Activated CD4-positive, alpha-beta T cell treated with anti-CD3 and anti-CD28 coated beads for 36 hours (primary cell): ENCODE measurements at regions of chr10 and their contacts with region 1.

Region 1: DNA sequence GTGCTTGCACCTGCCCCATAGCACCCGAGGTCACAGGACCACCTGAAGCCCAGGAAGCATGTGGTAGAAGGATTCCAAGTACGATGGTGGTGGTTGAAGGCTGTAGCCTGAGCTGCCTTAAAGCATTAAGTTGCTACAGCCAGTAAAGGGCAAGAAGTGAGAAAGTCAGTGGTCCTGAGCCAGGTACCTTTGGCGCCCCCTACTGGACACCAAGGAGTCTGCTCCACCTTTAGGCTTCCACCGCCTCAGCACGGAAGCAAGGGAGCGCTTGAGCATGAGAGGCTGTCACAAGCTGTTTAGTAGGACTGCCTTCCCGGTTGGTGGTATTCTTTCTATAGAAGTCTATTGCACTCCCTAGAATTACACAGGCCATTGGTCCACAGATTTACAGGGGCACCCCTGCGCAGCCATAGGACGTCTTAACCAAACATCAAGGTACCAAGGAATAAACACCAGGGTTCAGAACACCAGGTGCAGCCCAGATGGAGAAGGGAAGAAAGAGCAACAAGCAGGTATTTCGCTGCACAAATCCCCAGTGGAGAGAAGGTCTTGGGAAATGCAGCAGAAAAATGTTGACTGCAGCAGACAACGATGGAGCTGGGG is 2.2 kb downstream of the CRTAC1 start:
- DNase-seq: peak; percentile 85
- ATAC-seq: peak; percentile 92
- H3K4me3 Mint-ChIP-seq: no peak overlapping the region
- H3K27ac Mint-ChIP-seq: no peak overlapping the region
- H3K4me1 Mint-ChIP-seq: peaks cover 3% of the 10 kb centered on the region
- H3K27me3 Mint-ChIP-seq: peaks cover 39% of the 10 kb centered on the region

Region 2: GRCh38 chr10:97792141-97792721 is 236.0 kb before region 1 on chr10:
- CTCF ChIA-PET with region 1: interaction called, 3 read pairs
- POLR2A ChIA-PET with region 1: no interaction called
- intact Hi-C with region 1: loop called (anchors 5 to 10 kb)
- DNase-seq: peak; percentile 85
- ATAC-seq: peak; percentile 81
- H3K4me3 Mint-ChIP-seq: no peak overlapping the region
- H3K27ac Mint-ChIP-seq: no peak overlapping the region
- H3K4me1 Mint-ChIP-seq: peaks cover 19% of the 10 kb centered on the region
- H3K27me3 Mint-ChIP-seq: no peaks in the 10 kb centered on the region

Region 3: GRCh38 chr10:98010939-98011685 is 17.2 kb before region 1 on chr10:
- CTCF ChIA-PET with region 1: interaction called, 10 read pairs
- POLR2A ChIA-PET with region 1: no interaction called
- intact Hi-C with region 1: no loop called
- DNase-seq: no peak
- ATAC-seq: no peak
- H3K4me3 Mint-ChIP-seq: no peak overlapping the region
- H3K27ac Mint-ChIP-seq: no peak overlapping the region
- H3K4me1 Mint-ChIP-seq: peaks cover 4% of the 10 kb centered on the region
- H3K27me3 Mint-ChIP-seq: peaks cover 20% of the 10 kb centered on the region

Region 4: DNA sequence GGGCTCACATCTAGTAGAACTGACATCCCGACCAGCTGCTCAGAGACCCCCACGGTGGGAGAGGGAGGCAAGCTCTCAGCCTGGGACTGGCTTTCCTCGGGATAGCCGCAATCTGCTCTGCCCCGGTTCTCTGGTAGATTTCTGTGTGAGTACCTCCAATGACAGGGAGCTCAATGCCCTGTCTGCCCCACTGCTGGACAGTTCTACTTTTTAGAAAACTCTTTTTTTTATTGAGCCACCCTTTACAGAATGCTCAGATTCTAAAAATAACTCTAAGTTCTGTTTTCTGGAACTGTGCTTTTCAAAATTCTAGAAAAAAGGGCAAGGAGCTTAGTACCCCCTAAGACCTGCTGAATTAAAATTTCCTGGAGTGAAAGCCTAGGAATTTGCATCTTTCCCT is 25.4 kb after region 1 on chr10:
- CTCF ChIA-PET with region 1: no interaction called
- POLR2A ChIA-PET with region 1: no interaction called
- intact Hi-C with region 1: no loop called
- DNase-seq: no peak
- ATAC-seq: no peak
- H3K4me3 Mint-ChIP-seq: no peak overlapping the region
- H3K27ac Mint-ChIP-seq: no peak overlapping the region
- H3K4me1 Mint-ChIP-seq: no peaks in the 10 kb centered on the region
- H3K27me3 Mint-ChIP-seq: peaks cover 16% of the 10 kb centered on the region

Region 5: DNA sequence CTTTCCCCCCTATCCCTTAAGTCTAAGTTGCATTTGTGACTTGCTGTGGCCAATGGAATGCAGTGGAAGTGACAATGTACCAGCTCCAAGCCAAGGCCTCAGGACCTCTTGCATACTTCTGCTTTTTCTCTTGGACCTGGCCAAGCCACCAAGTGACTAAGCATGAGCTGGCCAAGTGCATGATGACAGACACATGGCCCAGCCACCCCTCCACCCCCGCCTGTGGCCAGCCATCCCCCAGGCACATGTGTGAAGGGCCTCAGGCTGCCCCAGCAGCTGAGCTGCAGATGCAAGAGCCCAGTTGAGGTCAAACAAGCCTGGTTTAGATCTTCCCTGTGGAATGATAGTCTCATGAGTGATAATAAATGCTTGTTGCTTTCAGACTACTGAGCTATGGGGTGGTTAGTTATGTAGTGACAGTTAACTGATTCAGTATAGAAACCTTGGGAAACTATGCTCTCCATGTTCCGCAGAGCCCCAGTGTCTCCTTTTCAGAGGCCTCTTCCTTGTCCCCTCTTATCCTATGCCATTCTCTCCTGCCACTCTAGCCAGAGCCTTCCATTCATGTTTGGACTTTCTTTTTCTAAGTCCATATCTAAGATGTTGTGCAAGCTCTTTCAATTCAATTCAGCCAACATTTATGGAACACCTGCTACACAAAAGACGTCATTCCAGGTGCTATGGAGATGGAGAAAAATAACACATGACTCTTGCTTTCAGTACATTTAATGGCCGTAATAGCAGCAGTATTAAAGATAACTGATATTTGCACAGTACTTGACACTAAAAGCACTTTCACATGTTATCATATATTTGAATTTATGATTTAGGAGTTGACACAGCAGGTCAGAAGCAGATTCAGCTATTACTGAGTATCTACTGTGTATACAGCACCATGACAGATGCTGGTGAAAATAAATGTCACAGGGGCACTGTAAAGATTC is 295.2 kb after region 1 on chr10:
- CTCF ChIA-PET with region 1: no interaction called
- POLR2A ChIA-PET with region 1: no interaction called
- intact Hi-C with region 1: no loop called
- DNase-seq: peak; percentile 22
- ATAC-seq: peak; percentile 42
- H3K4me3 Mint-ChIP-seq: no peak overlapping the region
- H3K27ac Mint-ChIP-seq: no peak overlapping the region
- H3K4me1 Mint-ChIP-seq: no peaks in the 10 kb centered on the region
- H3K27me3 Mint-ChIP-seq: peaks cover 5% of the 10 kb centered on the region